Naive thymus-derived CD4-positive, alpha-beta T cell (primary cell): ENCODE measurements at regions of chr22 and their contacts with region 1.

Region 1: GRCh38 chr22:41543854-41544670 is at the start of gene POLR3H:
- DNase-seq: peak; percentile 89 to 97 (median 95)
- ATAC-seq: peak; percentile 100
- H3K4me3 ChIP-seq: peak within 1 kb of the TSS; percentile 96
- H3K4me3 Mint-ChIP-seq: peak within 1 kb of the TSS; percentile 82 to 100 (median 97)
- H3K27ac ChIP-seq: peak within 1 kb of the TSS; percentile 84
- H3K27ac Mint-ChIP-seq: peak within 1 kb of the TSS; percentile 88 to 98 (median 95)
- H3K4me1 ChIP-seq: peaks cover 7 to 15% of the 10 kb centered on the region in 2 donors
- H3K4me1 Mint-ChIP-seq: peaks cover 30 to 52% (median 45%) of the 10 kb centered on the region in 7 donors
- H3K27me3 ChIP-seq: no peaks in the 10 kb centered on the region
- H3K27me3 Mint-ChIP-seq: no peaks in the 10 kb centered on the region
- total RNA-seq, gene POLR3H: 21.7 to 59.6 (median 28.5) TPM

Region 2: GRCh38 chr22:41526837-41527799 is 16.9 kb before region 1 on chr22:
- CTCF ChIA-PET with region 1: interaction called, 5 read pairs
- POLR2A ChIA-PET with region 1: interaction called, 4 read pairs
- intact Hi-C with region 1: loop called in 1 of 2 experiments (anchors 1 kb)
- DNase-seq: peak; percentile 36 to 75 (median 64)
- ATAC-seq: peak; percentile 78
- H3K4me3 ChIP-seq: no peak overlapping the region
- H3K4me3 Mint-ChIP-seq: no peak overlapping the region
- H3K27ac ChIP-seq: peak overlapping the region; percentile 48
- H3K27ac Mint-ChIP-seq: peak overlapping the region in 7 of 9 donors; percentile 40 to 84 (median 77)
- H3K4me1 ChIP-seq: peaks cover 10 to 16% of the 10 kb centered on the region in 2 donors
- H3K4me1 Mint-ChIP-seq: peaks cover 0 to 25% (median 20%) of the 10 kb centered on the region in 7 donors
- H3K27me3 ChIP-seq: no peaks in the 10 kb centered on the region
- H3K27me3 Mint-ChIP-seq: no peaks in the 10 kb centered on the region

Region 3: DNA sequence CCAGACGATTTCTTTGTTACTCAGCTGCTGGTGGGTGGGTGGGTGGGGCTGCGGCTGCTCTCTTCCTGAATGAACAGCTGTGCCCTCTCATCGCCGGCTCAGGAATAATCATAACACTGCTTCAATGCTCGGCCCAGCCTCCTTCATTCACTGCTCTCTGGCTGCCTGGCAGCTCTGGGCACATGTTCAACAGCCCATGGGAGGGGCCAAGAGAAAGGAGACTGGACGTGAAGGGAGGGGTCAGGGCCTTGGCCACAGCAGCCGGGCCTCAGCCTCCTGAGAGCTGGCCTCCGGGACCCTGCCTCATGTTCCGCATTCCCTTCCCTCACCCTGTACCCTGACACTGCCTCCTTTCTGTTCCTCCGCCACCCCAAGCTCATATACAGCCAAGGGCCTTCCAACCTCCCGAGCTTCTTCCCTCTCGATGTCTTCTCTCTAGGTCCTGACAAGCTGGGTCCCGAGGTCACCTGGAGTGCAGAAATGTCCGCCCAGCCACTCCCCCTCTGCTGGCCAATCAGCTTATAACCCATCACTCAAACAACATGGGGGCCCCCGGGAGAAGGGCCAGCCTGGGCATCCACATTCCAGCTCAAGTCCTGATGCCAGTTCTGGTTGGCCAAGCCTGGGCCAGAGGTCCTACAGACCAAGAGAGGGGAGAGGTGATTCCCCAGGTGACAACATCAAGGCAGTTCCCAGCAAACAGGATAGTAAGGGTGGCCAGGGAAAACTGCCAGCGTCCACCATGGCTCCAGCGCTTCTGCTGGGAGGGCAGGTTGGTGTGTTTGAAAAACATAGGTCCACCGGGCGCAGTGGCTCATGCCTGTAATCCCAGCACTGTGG is 13.6 kb after region 1 on chr22:
- CTCF ChIA-PET with region 1: no interaction called
- POLR2A ChIA-PET with region 1: no interaction called
- intact Hi-C with region 1: no loop called
- DNase-seq: no peak
- ATAC-seq: no peak
- H3K4me3 ChIP-seq: no peak overlapping the region
- H3K4me3 Mint-ChIP-seq: no peak overlapping the region
- H3K27ac ChIP-seq: no peak overlapping the region
- H3K27ac Mint-ChIP-seq: no peak overlapping the region
- H3K4me1 ChIP-seq: no peaks in the 10 kb centered on the region
- H3K4me1 Mint-ChIP-seq: peaks cover 0 to 9% (median 0%) of the 10 kb centered on the region in 7 donors
- H3K27me3 ChIP-seq: no peaks in the 10 kb centered on the region
- H3K27me3 Mint-ChIP-seq: peaks cover 12 to 59% (median 31%) of the 10 kb centered on the region in 5 donors

Region 4: GRCh38 chr22:41596776-41597634 is 52.9 kb after region 1 on chr22:
- CTCF ChIA-PET with region 1: interaction called, 8 read pairs
- POLR2A ChIA-PET with region 1: no interaction called
- intact Hi-C with region 1: loop called in 1 of 2 experiments (anchors 1 kb)
- DNase-seq: peak in 6 of 9 donors; percentile 17 to 43 (median 28)
- ATAC-seq: peak; percentile 85
- H3K4me3 ChIP-seq: no peak overlapping the region
- H3K4me3 Mint-ChIP-seq: no peak overlapping the region
- H3K27ac ChIP-seq: no peak overlapping the region
- H3K27ac Mint-ChIP-seq: no peak overlapping the region
- H3K4me1 ChIP-seq: no peaks in the 10 kb centered on the region
- H3K4me1 Mint-ChIP-seq: peaks cover 0 to 6% (median 0%) of the 10 kb centered on the region in 7 donors
- H3K27me3 ChIP-seq: no peaks in the 10 kb centered on the region
- H3K27me3 Mint-ChIP-seq: no peaks in the 10 kb centered on the region